ENCODE measurements at regions of chr17 and their contacts with region 1.

Region 1: DNA sequence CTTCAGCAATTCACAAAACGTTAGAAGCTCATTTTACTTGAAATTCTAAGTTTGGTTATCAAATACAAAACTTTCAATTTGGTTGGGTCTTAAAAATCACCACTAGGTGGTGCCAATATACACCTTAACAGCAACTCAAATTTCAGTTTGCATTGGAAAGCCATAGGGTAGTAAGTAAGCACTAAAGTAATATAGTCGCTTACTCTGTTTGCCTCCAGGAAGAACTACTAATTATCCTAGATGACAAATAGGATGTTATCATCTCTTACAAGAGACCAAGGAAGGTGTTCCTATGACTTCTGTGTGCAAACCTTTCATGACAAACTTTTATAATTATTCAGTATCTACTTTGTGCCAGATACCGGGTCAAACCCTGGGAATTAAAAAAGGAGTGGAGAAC is 93.3 kb downstream of the MYO1D start:
- DNase-seq: peak; percentile 31
- H3K4me3 ChIP-seq: no peak overlapping the region
- H3K27ac ChIP-seq: no peak overlapping the region
- H3K4me1 ChIP-seq: no peaks in the 10 kb centered on the region
- H3K27me3 ChIP-seq: no peaks in the 10 kb centered on the region
- CTCF ChIP-seq: peak; percentile 59 to 94 (median 89)
- POLR2A ChIP-seq: no peak

Region 2: GRCh38 chr17:32877164-32877764 is 93.7 kb after region 1 on chr17:
- intact Hi-C with region 1: loop called (anchors 2 kb)
- DNase-seq: peak; percentile 90
- H3K4me3 ChIP-seq: peak overlapping the region; percentile 87 to 97
- H3K27ac ChIP-seq: peak overlapping the region; percentile 95 to 97
- H3K4me1 ChIP-seq: no peaks in the 10 kb centered on the region
- H3K27me3 ChIP-seq: no peaks in the 10 kb centered on the region
- CTCF ChIP-seq: peak; percentile 61 to 99 (median 90)
- POLR2A ChIP-seq: no peak

Region 3: GRCh38 chr17:32997753-32998632 is 214.4 kb after region 1 on chr17:
- intact Hi-C with region 1: loop called (anchors 5 kb)
- DNase-seq: peak; percentile 68
- H3K4me3 ChIP-seq: no peak overlapping the region
- H3K27ac ChIP-seq: no peak overlapping the region
- H3K4me1 ChIP-seq: no peaks in the 10 kb centered on the region
- H3K27me3 ChIP-seq: no peaks in the 10 kb centered on the region
- CTCF ChIP-seq: peak; percentile 63 to 83 (median 78)
- POLR2A ChIP-seq: no peak

Region 4: GRCh38 chr17:33750943-33751701 is 967.5 kb after region 1 on chr17:
- intact Hi-C with region 1: loop called (anchors 5 kb)
- DNase-seq: peak; percentile 42
- H3K4me3 ChIP-seq: no peak overlapping the region
- H3K27ac ChIP-seq: no peak overlapping the region
- H3K4me1 ChIP-seq: no peaks in the 10 kb centered on the region
- H3K27me3 ChIP-seq: no peaks in the 10 kb centered on the region
- CTCF ChIP-seq: peak; percentile 82 to 85 (median 84)
- POLR2A ChIP-seq: no peak

Measured in prostate gland (tissue), 2 donors.